ENCODE measurements at regions of chr11 and their contacts with region 1.

Region 1: GRCh38 chr11:61041755-61042518 is 60.4 kb upstream of the CD5 start:
- DNase-seq: no peak
- H3K4me3 ChIP-seq: no peak overlapping the region
- CTCF ChIP-seq: no peak

Region 2: GRCh38 chr11:61007591-61008478 is 34.1 kb before region 1 on chr11:
- in situ Hi-C with region 1: loop called (anchors 5 kb)
- DNase-seq: no peak
- H3K4me3 ChIP-seq: peak overlapping the region; percentile 19
- CTCF ChIP-seq: no peak